CD4-positive, alpha-beta T cell (primary cell): ENCODE measurements at regions of chr17 and their contacts with region 1.

Region 1: GRCh38 chr17:70074956-70075355 is at the start of gene KCNJ16:
- DNase-seq: no peak
- ATAC-seq: no peak
- H3K4me3 ChIP-seq: no peak within 1 kb of the TSS
- H3K4me3 Mint-ChIP-seq: no peak within 1 kb of the TSS
- H3K27ac ChIP-seq: no peak within 1 kb of the TSS
- H3K27ac Mint-ChIP-seq: no peak within 1 kb of the TSS
- H3K4me1 ChIP-seq: no peaks in the 10 kb centered on the region
- H3K4me1 Mint-ChIP-seq: no peaks in the 10 kb centered on the region
- H3K27me3 ChIP-seq: no peaks in the 10 kb centered on the region
- H3K27me3 Mint-ChIP-seq: no peaks in the 10 kb centered on the region
- CTCF ChIP-seq: no peak
- total RNA-seq, gene KCNJ16: not detected

Region 2: GRCh38 chr17:70013911-70014310 is 61.0 kb before region 1 on chr17:
- CTCF ChIA-PET with region 1: no interaction called
- POLR2A ChIA-PET with region 1: no interaction called
- intact Hi-C with region 1: loop called in 1 of 2 experiments (anchors 10 kb)
- DNase-seq: no peak
- ATAC-seq: no peak
- H3K4me3 ChIP-seq: no peak overlapping the region
- H3K4me3 Mint-ChIP-seq: no peak overlapping the region
- H3K27ac ChIP-seq: no peak overlapping the region
- H3K27ac Mint-ChIP-seq: no peak overlapping the region
- H3K4me1 ChIP-seq: no peaks in the 10 kb centered on the region
- H3K4me1 Mint-ChIP-seq: no peaks in the 10 kb centered on the region
- H3K27me3 ChIP-seq: no peaks in the 10 kb centered on the region
- H3K27me3 Mint-ChIP-seq: no peaks in the 10 kb centered on the region
- CTCF ChIP-seq: no peak

Region 3: DNA sequence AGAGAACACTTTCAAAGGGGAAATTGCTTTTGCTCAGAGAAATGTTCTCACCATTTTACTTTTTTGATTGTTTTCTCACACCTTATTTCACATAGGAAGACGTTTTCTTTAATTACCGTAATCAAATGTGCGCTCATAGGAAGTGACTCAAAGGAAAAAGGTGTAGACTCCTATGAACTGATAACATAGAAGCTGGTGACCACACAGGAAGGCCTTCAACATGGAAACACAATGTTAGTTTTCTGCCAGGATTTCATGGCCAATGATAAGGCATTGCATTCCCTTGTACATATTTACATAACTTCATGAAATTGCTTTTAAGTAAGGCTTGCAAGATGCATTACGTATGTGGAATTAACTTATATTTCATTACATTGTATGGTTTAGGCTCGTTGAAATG is 40.8 kb before region 1 on chr17:
- CTCF ChIA-PET with region 1: no interaction called
- POLR2A ChIA-PET with region 1: no interaction called
- intact Hi-C with region 1: no loop called
- DNase-seq: no peak
- ATAC-seq: no peak
- H3K4me3 ChIP-seq: no peak overlapping the region
- H3K4me3 Mint-ChIP-seq: no peak overlapping the region
- H3K27ac ChIP-seq: no peak overlapping the region
- H3K27ac Mint-ChIP-seq: no peak overlapping the region
- H3K4me1 ChIP-seq: no peaks in the 10 kb centered on the region
- H3K4me1 Mint-ChIP-seq: no peaks in the 10 kb centered on the region
- H3K27me3 ChIP-seq: no peaks in the 10 kb centered on the region
- H3K27me3 Mint-ChIP-seq: no peaks in the 10 kb centered on the region
- CTCF ChIP-seq: no peak

Region 4: DNA sequence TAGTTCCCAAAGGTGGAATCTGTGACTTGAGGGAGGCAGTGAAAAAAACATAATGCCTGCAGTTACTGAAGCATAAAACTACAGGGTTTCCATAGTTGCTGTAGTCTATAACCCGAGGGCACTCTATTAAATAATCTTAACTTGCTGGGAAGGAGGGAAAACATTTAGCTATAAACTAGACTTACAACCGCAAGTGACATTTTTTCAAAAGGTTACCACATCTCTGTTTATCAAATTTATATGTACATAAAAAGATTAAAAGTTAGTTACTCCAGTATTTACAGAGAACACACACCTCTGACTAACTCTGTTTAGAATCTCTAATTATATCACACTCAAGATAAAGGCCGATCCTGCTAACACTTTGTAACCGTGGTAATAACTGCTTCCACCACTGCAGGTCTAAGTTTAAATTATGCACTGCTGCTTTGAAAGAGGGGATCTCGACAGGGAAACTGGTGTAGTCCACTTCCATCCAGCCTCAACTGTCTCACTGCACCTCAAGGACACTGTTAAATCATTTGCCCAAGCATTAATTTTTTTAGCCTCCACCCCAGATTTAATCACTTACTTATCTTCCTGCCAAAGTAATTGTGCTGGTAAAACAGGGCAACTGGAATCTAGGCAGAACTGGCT is 14.7 kb after region 1 on chr17:
- CTCF ChIA-PET with region 1: no interaction called
- POLR2A ChIA-PET with region 1: no interaction called
- intact Hi-C with region 1: no loop called
- DNase-seq: no peak
- ATAC-seq: no peak
- H3K4me3 ChIP-seq: no peak overlapping the region
- H3K4me3 Mint-ChIP-seq: no peak overlapping the region
- H3K27ac ChIP-seq: no peak overlapping the region
- H3K27ac Mint-ChIP-seq: no peak overlapping the region
- H3K4me1 ChIP-seq: no peaks in the 10 kb centered on the region
- H3K4me1 Mint-ChIP-seq: no peaks in the 10 kb centered on the region
- H3K27me3 ChIP-seq: no peaks in the 10 kb centered on the region
- H3K27me3 Mint-ChIP-seq: no peaks in the 10 kb centered on the region
- CTCF ChIP-seq: no peak

Region 5: GRCh38 chr17:70254735-70255460 is 179.9 kb after region 1 on chr17:
- CTCF ChIA-PET with region 1: no interaction called
- POLR2A ChIA-PET with region 1: no interaction called
- intact Hi-C with region 1: no loop called
- DNase-seq: no peak
- ATAC-seq: no peak
- H3K4me3 ChIP-seq: no peak overlapping the region
- H3K4me3 Mint-ChIP-seq: no peak overlapping the region
- H3K27ac ChIP-seq: no peak overlapping the region
- H3K27ac Mint-ChIP-seq: no peak overlapping the region
- H3K4me1 ChIP-seq: no peaks in the 10 kb centered on the region
- H3K4me1 Mint-ChIP-seq: no peaks in the 10 kb centered on the region
- H3K27me3 ChIP-seq: no peaks in the 10 kb centered on the region
- H3K27me3 Mint-ChIP-seq: no peaks in the 10 kb centered on the region
- CTCF ChIP-seq: no peak